ENCODE measurements at regions of chr7 and their contacts with region 1.

Region 1: GRCh38 chr7:134690016-134690415 is 43.4 kb downstream of the BPGM start:
- DNase-seq: no peak
- H3K4me3 ChIP-seq: peak overlapping the region; percentile 19 to 40
- H3K27ac ChIP-seq: peak overlapping the region; percentile 43 to 83
- H3K4me1 ChIP-seq: peaks cover 13% of the 10 kb centered on the region
- H3K27me3 ChIP-seq: no peaks in the 10 kb centered on the region
- CTCF ChIP-seq: peak in 2 of 3 experiments; percentile 56 to 60
- POLR2A ChIP-seq: no peak

Region 2: GRCh38 chr7:134502463-134503371 is 187.3 kb before region 1 on chr7:
- intact Hi-C with region 1: no loop called
- DNase-seq: peak; percentile 41
- H3K4me3 ChIP-seq: no peak overlapping the region
- H3K27ac ChIP-seq: no peak overlapping the region
- H3K4me1 ChIP-seq: no peaks in the 10 kb centered on the region
- H3K27me3 ChIP-seq: no peaks in the 10 kb centered on the region
- CTCF ChIP-seq: no peak
- POLR2A ChIP-seq: no peak

Region 3: GRCh38 chr7:134741907-134742635 is 52.1 kb after region 1 on chr7:
- intact Hi-C with region 1: loop called (anchors 10 kb)
- DNase-seq: peak; percentile 18
- H3K4me3 ChIP-seq: no peak overlapping the region
- H3K27ac ChIP-seq: peak overlapping the region; percentile 64 to 81
- H3K4me1 ChIP-seq: peaks cover 10% of the 10 kb centered on the region
- H3K27me3 ChIP-seq: no peaks in the 10 kb centered on the region
- CTCF ChIP-seq: no peak
- POLR2A ChIP-seq: no peak

Region 4: DNA sequence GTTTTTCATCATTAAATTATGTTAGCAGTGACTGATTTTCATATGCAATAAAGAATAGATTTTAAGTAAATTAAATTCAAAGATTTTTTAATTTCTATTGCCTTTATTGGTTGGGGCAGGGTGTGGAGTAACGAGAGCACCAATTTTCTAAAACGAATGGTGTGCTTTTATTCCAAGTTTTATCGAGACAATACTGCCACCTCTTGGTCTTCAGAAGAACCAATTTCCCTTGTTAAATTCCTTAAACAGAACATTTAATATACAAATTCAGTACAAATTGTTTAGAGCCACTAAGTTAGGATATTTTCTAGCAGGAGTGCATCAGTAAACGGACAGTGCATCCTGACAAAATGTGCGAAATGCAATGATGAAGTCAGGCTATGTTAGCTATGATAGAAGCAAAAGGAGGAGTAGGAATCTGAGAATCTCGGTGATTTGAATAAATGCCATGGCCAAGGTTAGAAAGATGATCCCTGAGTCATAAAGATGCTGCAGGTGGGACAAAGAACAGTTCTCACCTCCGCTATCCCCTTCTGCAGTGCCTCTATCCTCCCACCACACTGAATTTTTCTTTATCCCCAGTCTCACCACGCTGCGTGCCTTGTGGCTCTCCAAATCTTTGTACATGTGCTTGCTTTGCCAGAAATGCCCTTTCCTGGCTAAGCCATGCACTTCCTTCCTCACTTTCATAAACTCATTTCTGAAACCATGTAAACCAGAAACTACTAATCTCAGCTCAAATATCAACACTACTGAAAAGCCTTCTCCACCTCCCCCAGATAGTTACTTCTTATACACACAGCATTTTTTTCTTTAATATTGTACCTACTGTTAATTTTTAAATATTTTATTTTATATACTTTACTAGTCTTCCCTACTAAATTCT is 264.4 kb after region 1 on chr7:
- intact Hi-C with region 1: loop called (anchors 10 kb)
- DNase-seq: no peak
- H3K4me3 ChIP-seq: no peak overlapping the region
- H3K27ac ChIP-seq: no peak overlapping the region
- H3K4me1 ChIP-seq: no peaks in the 10 kb centered on the region
- H3K27me3 ChIP-seq: no peaks in the 10 kb centered on the region
- CTCF ChIP-seq: peak; percentile 33 to 55 (median 48)
- POLR2A ChIP-seq: no peak

Region 5: GRCh38 chr7:135169141-135169960 is 479.3 kb after region 1 on chr7:
- intact Hi-C with region 1: loop called (anchors 10 kb)
- DNase-seq: no peak
- H3K4me3 ChIP-seq: peak overlapping the region; percentile 73 to 79
- H3K27ac ChIP-seq: peak overlapping the region; percentile 84 to 93
- H3K4me1 ChIP-seq: peaks cover 16% of the 10 kb centered on the region
- H3K27me3 ChIP-seq: no peaks in the 10 kb centered on the region
- CTCF ChIP-seq: no peak
- POLR2A ChIP-seq: no peak

Measured in testis (tissue), 5 donors.